GM12878 (cell line): ENCODE measurements at regions of chr9 and their contacts with region 1.

Region 1: DNA sequence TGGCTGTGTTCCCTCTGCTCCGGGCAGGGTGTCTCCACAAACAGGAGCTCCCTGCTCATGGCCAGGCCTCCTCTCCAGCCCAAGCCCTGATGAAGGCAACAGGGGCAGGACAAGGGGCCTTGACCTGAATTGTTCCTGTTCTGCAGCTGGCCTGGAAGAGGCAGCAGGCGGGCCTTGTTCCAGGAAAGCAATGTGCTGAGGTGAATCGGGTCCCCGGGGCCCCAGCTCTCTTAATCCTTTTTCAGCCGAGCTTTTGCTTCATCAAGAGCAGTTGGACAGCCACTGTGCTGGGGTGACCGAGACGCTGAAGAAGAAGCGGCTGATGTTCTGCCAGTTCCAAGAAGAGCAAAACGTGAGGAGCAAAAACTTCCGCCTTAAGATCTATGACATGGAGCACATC is 41.4 kb downstream of the CCDC180 start:
- DNase-seq: no peak
- ATAC-seq: no peak
- H3K4me3 ChIP-seq: no peak overlapping the region
- H3K27ac ChIP-seq: no peak overlapping the region
- H3K4me1 ChIP-seq: no peaks in the 10 kb centered on the region
- H3K27me3 ChIP-seq: peaks cover 0 to 3% of the 10 kb centered on the region in 2 experiments
- CTCF ChIP-seq: no peak
- EP300 ChIP-seq: no peak
- POLR2A ChIP-seq: no peak
- RAD21 ChIP-seq: no peak

Region 2: DNA sequence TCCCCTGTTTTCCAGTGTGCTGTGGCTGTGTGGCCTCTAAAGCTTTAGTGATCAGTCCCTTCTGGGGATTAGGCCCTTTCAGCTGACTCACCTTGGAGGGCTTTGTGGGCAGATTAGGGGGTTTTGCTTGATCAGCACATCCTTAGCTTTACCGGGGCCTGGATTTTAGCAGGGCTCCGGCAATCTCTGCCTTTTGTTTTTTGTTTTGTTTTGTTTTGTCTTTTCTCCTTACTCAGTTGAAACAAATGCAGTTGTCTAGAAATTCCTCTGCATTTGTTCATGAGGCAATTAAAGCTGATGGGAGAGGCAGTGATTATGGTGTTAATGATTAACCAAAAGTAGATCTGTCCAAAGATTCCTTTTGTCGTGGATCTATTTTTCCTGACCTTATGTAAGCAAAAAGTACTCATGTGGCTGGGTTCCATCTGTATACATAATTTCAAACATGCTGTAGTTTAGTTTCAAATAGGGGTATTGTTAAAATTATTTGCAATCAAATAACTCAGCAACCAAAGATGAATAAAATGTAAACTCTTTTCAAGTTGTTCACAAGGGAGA is 57.8 kb after region 1 on chr9:
- CTCF ChIA-PET with region 1: no interaction called
- POLR2A ChIA-PET with region 1: no interaction called
- RAD21 ChIA-PET with region 1: no interaction called
- SMC1A ChIA-PET with region 1: no interaction called
- in situ Hi-C with region 1: loop called (anchors 10 kb)
- intact Hi-C with region 1: no loop called
- DNase-seq: no peak
- ATAC-seq: peak; percentile 60
- H3K4me3 ChIP-seq: no peak overlapping the region
- H3K27ac ChIP-seq: no peak overlapping the region
- H3K4me1 ChIP-seq: no peaks in the 10 kb centered on the region
- H3K27me3 ChIP-seq: no peaks in the 10 kb centered on the region; a peak in 1 of 4 replicates
- CTCF ChIP-seq: no peak
- EP300 ChIP-seq: no peak
- POLR2A ChIP-seq: no peak
- RAD21 ChIP-seq: no peak